ENCODE measurements at regions of chr5 and their contacts with region 1.

Region 1: DNA sequence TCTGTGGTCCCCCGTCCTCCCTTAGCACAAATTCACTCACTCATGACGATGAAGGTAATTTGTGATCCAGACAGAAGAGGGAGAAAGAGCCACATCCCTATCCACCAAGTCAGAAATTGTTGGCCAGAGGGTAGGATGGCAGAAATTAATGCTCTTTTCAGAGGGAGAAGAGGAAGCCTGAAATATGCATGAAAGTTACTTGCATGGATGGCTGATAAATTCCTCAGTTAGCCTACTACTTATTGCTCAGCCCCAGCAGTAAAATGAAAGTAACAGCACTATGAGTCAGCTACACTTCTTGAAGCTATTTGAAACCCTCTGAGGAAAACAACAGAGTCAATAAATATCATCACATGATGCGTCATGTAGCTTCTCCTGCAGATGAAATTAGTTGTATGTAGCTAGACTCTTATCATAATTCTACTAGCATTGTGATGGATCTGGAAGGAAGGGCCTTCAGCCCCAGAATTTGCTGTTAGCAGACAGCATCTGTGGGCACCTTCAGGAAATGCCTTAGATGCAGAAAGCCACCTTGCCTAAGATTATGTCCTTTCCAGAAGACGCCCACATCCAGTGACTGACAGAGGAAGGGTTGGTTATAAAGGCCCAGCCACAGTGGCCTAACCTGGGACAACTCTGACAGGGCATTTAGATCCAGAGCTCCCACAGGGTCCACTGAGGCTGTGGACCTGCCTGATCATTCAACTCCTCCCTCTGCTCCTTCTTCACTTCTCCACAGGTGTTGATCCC is 81.2 kb upstream of the CCDC112 start:
- DNase-seq: peak in 1 of 2 donors; percentile 24
- ATAC-seq: peak in 7 of 8 donors; percentile 36 to 84 (median 68)
- H3K4me3 ChIP-seq: peak overlapping the region in 1 of 10 donors; percentile 5
- H3K27ac ChIP-seq: peak overlapping the region in 7 of 10 donors; percentile 34 to 73 (median 52)
- H3K4me1 ChIP-seq: peaks cover 0 to 29% (median 14%) of the 10 kb centered on the region in 9 donors
- H3K27me3 ChIP-seq: no peaks in the 10 kb centered on the region
- CTCF ChIP-seq: peak; percentile 29 to 62 (median 49)

Region 2: GRCh38 chr5:115321309-115321708 is 56.3 kb before region 1 on chr5:
- intact Hi-C with region 1: loop called in 4 of 10 experiments (anchors 5 to 10 kb)
- DNase-seq: no peak
- ATAC-seq: no peak
- H3K4me3 ChIP-seq: no peak overlapping the region
- H3K27ac ChIP-seq: no peak overlapping the region
- H3K4me1 ChIP-seq: peaks cover 0 to 32% (median 9%) of the 10 kb centered on the region in 9 donors
- H3K27me3 ChIP-seq: no peaks in the 10 kb centered on the region
- CTCF ChIP-seq: no peak

Region 3: GRCh38 chr5:115460472-115460871 is 82.8 kb after region 1 on chr5:
- intact Hi-C with region 1: loop called in 1 of 10 experiments (anchors 5 kb)
- DNase-seq: peak; percentile 78 to 81
- ATAC-seq: peak; percentile 78 to 93 (median 91)
- H3K4me3 ChIP-seq: no peak overlapping the region
- H3K27ac ChIP-seq: peak overlapping the region; percentile 58 to 86 (median 74)
- H3K4me1 ChIP-seq: peaks cover 0 to 68% (median 46%) of the 10 kb centered on the region in 9 donors
- H3K27me3 ChIP-seq: no peaks in the 10 kb centered on the region
- CTCF ChIP-seq: no peak

Region 4: DNA sequence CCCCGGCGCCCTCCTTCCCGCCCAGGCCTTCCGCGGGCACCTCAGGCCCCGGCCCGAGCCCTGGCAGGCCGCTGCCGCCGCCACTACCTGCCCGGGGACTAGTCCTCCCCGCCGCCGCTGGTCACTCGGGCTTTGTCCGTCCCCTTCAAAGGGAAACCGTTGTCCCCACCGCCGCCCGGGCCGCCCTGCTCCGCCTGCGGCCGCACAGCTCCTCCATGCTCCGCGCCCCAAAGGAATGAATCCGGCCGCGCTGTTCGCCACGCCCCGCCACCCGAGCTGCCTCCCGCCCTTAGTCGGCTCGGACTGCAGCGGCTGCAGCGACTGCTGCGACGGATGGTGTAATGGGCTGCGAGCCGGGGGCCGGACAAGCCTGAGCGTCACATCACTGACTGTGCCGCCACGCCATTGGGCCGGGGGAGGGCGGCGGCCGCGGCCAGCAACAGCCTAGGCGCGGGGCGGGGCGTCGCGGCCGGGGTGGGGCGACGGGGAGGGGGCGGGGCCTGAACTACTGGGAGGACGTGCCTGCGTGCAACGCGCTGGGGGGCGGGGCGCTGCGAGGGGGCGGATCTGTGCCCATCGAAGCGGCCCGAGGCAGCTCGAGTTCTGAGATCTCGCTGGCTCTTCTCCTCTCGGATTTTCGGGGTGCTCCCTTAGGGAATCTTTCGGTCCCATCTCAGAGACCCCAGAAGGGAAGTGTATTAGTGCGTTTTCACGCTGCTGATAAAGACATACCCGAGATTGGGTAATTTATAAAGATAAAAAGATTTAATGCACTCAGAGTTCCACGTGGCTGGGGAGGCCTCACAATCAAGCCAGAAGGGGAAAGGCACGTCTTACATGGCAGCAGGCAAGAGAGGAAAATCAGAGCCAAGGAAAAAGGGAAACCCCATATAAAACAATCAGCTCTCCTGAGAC is 167.1 kb after region 1 on chr5 and contains the start of gene FEM1C:
- intact Hi-C with region 1: loop called in 6 of 10 experiments (anchors 1 to 10 kb)
- DNase-seq: peak; percentile 97 to 99
- ATAC-seq: peak; percentile 97 to 99 (median 98)
- H3K4me3 ChIP-seq: peak within 1 kb of the TSS; percentile 74 to 96 (median 90)
- H3K27ac ChIP-seq: peak within 1 kb of the TSS; percentile 93 to 99 (median 98)
- H3K4me1 ChIP-seq: peaks cover 0 to 43% (median 32%) of the 10 kb centered on the region in 9 donors
- H3K27me3 ChIP-seq: no peaks in the 10 kb centered on the region
- CTCF ChIP-seq: peak in 1 of 9 donors; percentile 3
- total RNA-seq, gene FEM1C: 40.2 to 72.2 (median 57.5) TPM

Region 5: GRCh38 chr5:115579747-115580173 is 202.1 kb after region 1 on chr5:
- intact Hi-C with region 1: loop called in 9 of 10 experiments (anchors 1 to 10 kb)
- DNase-seq: no peak
- ATAC-seq: no peak
- H3K4me3 ChIP-seq: no peak overlapping the region
- H3K27ac ChIP-seq: no peak overlapping the region
- H3K4me1 ChIP-seq: peaks cover 0 to 20% (median 0%) of the 10 kb centered on the region in 9 donors
- H3K27me3 ChIP-seq: no peaks in the 10 kb centered on the region
- CTCF ChIP-seq: no peak

Measured in heart right ventricle (tissue), 16 donors.